CD8-positive, alpha-beta T cell (primary cell): ENCODE measurements at regions of chr5 and their contacts with region 1.

Region 1: DNA sequence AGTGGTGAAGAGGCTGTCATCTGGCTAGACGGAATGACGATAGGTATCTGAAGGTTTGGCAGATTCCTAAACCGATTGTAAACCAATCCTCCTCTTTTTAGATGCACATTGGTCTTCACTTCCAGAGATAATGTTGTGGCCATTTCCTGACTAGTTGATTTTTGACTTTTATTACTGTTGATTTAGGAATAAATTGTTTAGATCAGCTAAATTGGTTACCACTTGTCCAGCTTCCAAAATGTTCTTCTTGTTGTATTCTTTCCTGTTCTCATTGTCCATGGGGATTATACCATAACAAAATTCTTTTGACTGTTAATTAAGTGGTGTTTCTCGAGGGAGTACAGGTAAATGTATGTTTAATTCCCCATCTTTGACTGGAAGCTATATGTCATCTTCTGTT is 119.7 kb downstream of the MACROH2A1 start:
- DNase-seq: no peak
- ATAC-seq: no peak
- H3K4me3 ChIP-seq: no peak overlapping the region
- H3K4me3 Mint-ChIP-seq: no peak overlapping the region
- H3K27ac ChIP-seq: no peak overlapping the region
- H3K27ac Mint-ChIP-seq: no peak overlapping the region
- H3K4me1 ChIP-seq: no peaks in the 10 kb centered on the region
- H3K4me1 Mint-ChIP-seq: no peaks in the 10 kb centered on the region
- H3K27me3 ChIP-seq: no peaks in the 10 kb centered on the region
- H3K27me3 Mint-ChIP-seq: no peaks in the 10 kb centered on the region
- CTCF ChIP-seq: no peak

Region 2: GRCh38 chr5:135199919-135200318 is 79.4 kb before region 1 on chr5:
- CTCF ChIA-PET with region 1: no interaction called
- POLR2A ChIA-PET with region 1: no interaction called
- intact Hi-C with region 1: loop called in 1 of 2 experiments (anchors 2 kb)
- DNase-seq: no peak
- ATAC-seq: no peak
- H3K4me3 ChIP-seq: no peak overlapping the region
- H3K4me3 Mint-ChIP-seq: no peak overlapping the region
- H3K27ac ChIP-seq: no peak overlapping the region
- H3K27ac Mint-ChIP-seq: no peak overlapping the region
- H3K4me1 ChIP-seq: no peaks in the 10 kb centered on the region
- H3K4me1 Mint-ChIP-seq: no peaks in the 10 kb centered on the region
- H3K27me3 ChIP-seq: no peaks in the 10 kb centered on the region
- H3K27me3 Mint-ChIP-seq: peaks cover 26% of the 10 kb centered on the region
- CTCF ChIP-seq: no peak

Region 3: GRCh38 chr5:135214897-135215616 is 64.3 kb before region 1 on chr5:
- CTCF ChIA-PET with region 1: no interaction called
- POLR2A ChIA-PET with region 1: no interaction called
- intact Hi-C with region 1: no loop called
- DNase-seq: peak in 2 of 9 experiments; percentile 11 to 27
- ATAC-seq: no peak
- H3K4me3 ChIP-seq: no peak overlapping the region
- H3K4me3 Mint-ChIP-seq: no peak overlapping the region
- H3K27ac ChIP-seq: no peak overlapping the region
- H3K27ac Mint-ChIP-seq: no peak overlapping the region
- H3K4me1 ChIP-seq: no peaks in the 10 kb centered on the region
- H3K4me1 Mint-ChIP-seq: no peaks in the 10 kb centered on the region
- H3K27me3 ChIP-seq: no peaks in the 10 kb centered on the region
- H3K27me3 Mint-ChIP-seq: no peaks in the 10 kb centered on the region
- CTCF ChIP-seq: no peak

Region 4: GRCh38 chr5:135964670-135965320 is 685.5 kb after region 1 on chr5:
- CTCF ChIA-PET with region 1: no interaction called
- POLR2A ChIA-PET with region 1: no interaction called
- intact Hi-C with region 1: no loop called
- DNase-seq: no peak
- ATAC-seq: no peak
- H3K4me3 ChIP-seq: no peak overlapping the region
- H3K4me3 Mint-ChIP-seq: no peak overlapping the region
- H3K27ac ChIP-seq: no peak overlapping the region
- H3K27ac Mint-ChIP-seq: no peak overlapping the region
- H3K4me1 ChIP-seq: no peaks in the 10 kb centered on the region
- H3K4me1 Mint-ChIP-seq: no peaks in the 10 kb centered on the region
- H3K27me3 ChIP-seq: no peaks in the 10 kb centered on the region
- H3K27me3 Mint-ChIP-seq: peaks cover 8% of the 10 kb centered on the region
- CTCF ChIP-seq: no peak